ENCODE measurements at regions of chr17 and their contacts with region 1.

Region 1: DNA sequence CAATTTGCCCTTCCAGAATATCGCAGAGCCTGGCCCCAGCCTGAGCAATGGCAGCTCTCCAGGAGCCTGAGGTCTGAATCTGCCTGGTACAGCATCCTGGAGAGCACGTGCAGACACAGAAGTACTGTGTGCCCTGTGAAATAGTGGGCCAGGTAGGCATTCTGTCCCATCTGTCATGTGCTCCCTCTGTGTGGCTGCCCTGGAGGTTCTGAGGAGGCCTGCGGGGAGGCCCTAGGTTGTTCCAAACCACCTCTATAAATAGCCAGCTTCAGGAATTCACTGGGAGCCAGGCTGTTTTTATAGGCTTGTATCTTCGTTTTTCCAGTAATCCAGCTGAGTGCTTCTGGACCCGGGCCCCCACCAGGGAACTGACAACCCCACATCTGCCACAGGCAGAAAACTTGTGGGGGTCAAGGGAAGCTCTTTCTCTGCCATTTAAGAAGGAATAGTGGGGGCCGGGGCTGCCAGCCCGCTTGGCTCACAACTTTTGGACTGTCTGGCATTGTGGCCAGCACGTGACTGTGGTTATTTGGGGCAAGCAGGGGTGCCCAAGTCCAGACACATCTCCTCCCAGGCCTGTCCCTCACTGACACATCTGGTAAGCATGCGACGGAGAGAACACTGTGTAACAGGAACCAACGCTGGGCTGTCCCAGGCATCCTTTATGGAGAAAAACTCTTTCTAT is 356.3 kb upstream of the TNRC6C start:
- DNase-seq: peak; percentile 84
- ATAC-seq: peak; percentile 94

Region 2: GRCh38 chr17:77489911-77490255 is 112.3 kb before region 1 on chr17:
- intact Hi-C with region 1: no loop called
- DNase-seq: peak; percentile 91
- ATAC-seq: peak; percentile 95

Region 3: GRCh38 chr17:77555741-77556291 is 46.4 kb before region 1 on chr17:
- intact Hi-C with region 1: loop called (anchors 5 kb)
- DNase-seq: peak; percentile 65
- ATAC-seq: peak; percentile 32

Region 4: DNA sequence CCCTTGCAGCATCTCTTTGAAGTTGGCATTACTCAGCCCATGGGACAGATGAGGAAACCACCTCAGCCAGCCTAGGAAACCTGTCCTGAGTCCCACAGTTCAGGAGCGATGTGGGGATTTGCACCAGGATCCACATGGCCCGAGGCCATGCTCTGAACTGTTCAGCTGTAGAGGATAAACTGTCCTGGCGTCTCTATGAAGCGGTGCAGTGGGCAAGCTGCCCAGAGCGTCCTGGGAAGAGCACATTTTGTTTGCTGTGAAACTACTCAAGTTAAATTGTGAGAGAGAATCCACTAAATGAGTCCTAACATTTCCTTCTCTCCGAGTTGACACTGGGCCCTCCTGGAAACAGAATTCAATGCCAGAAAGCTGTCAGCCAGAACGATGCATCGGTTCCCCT is 79.7 kb after region 1 on chr17:
- intact Hi-C with region 1: loop called (anchors 2 kb)
- DNase-seq: peak; percentile 90
- ATAC-seq: peak; percentile 79

Region 5: GRCh38 chr17:77734341-77735080 is 132.3 kb after region 1 on chr17:
- intact Hi-C with region 1: loop called (anchors 2 kb)
- DNase-seq: peak; percentile 93
- ATAC-seq: peak; percentile 78

Region 6: GRCh38 chr17:77755410-77755963 is 153.3 kb after region 1 on chr17:
- intact Hi-C with region 1: no loop called
- DNase-seq: no peak
- ATAC-seq: peak; percentile 23

Region 7: GRCh38 chr17:77772461-77772897 is 170.3 kb after region 1 on chr17:
- intact Hi-C with region 1: no loop called
- DNase-seq: peak; percentile 83
- ATAC-seq: peak; percentile 91